Activated CD4-positive, alpha-beta T cell treated with anti-CD3 and anti-CD28 coated beads for 36 hours (primary cell): ENCODE measurements at regions of chr17 and their contacts with region 1.

Region 1: GRCh38 chr17:64320613-64321553 is 57.8 kb upstream of the TEX2 start:
- DNase-seq: peak; percentile 68
- ATAC-seq: peak; percentile 64
- H3K4me3 Mint-ChIP-seq: no peak overlapping the region
- H3K27ac Mint-ChIP-seq: no peak overlapping the region
- H3K4me1 Mint-ChIP-seq: peaks cover 6% of the 10 kb centered on the region
- H3K27me3 Mint-ChIP-seq: no peaks in the 10 kb centered on the region

Region 2: GRCh38 chr17:64336760-64337455 is 16.0 kb after region 1 on chr17:
- CTCF ChIA-PET with region 1: interaction called, 13 read pairs
- POLR2A ChIA-PET with region 1: no interaction called
- intact Hi-C with region 1: no loop called
- DNase-seq: no peak
- ATAC-seq: no peak
- H3K4me3 Mint-ChIP-seq: no peak overlapping the region
- H3K27ac Mint-ChIP-seq: peak overlapping the region; percentile 42
- H3K4me1 Mint-ChIP-seq: peaks cover 3% of the 10 kb centered on the region
- H3K27me3 Mint-ChIP-seq: no peaks in the 10 kb centered on the region

Region 3: GRCh38 chr17:64406321-64407200 is 85.7 kb after region 1 on chr17:
- CTCF ChIA-PET with region 1: interaction called, 28 read pairs
- POLR2A ChIA-PET with region 1: no interaction called
- intact Hi-C with region 1: no loop called
- DNase-seq: no peak
- ATAC-seq: peak; percentile 16
- H3K4me3 Mint-ChIP-seq: no peak overlapping the region
- H3K27ac Mint-ChIP-seq: no peak overlapping the region
- H3K4me1 Mint-ChIP-seq: peaks cover 6% of the 10 kb centered on the region
- H3K27me3 Mint-ChIP-seq: no peaks in the 10 kb centered on the region

Region 4: DNA sequence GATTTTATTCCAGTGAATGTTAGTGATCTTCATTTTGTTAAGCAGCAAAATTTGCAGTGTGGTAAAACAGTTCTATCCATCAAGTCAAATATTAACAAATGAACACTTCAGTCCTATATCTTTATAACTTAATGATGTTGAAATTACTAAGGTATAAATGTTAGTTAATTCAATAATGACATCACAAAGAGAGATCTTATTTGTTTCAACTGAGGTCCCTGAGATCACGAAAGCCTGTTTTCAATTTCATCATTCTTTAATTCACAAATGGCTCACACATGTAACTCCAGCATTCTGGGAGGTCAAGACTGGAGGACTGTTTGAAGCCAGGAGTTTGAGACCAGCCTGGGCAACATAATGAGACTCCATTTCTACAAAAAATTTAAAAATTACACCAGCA is 327.4 kb after region 1 on chr17:
- CTCF ChIA-PET with region 1: no interaction called
- POLR2A ChIA-PET with region 1: no interaction called
- intact Hi-C with region 1: loop called (anchors 5 to 10 kb)
- DNase-seq: no peak
- ATAC-seq: no peak
- H3K4me3 Mint-ChIP-seq: no peak overlapping the region
- H3K27ac Mint-ChIP-seq: peak overlapping the region; percentile 89
- H3K4me1 Mint-ChIP-seq: peaks cover 37% of the 10 kb centered on the region
- H3K27me3 Mint-ChIP-seq: no peaks in the 10 kb centered on the region

Region 5: GRCh38 chr17:64736804-64737492 is 416.1 kb after region 1 on chr17:
- CTCF ChIA-PET with region 1: interaction called, 4 read pairs
- POLR2A ChIA-PET with region 1: no interaction called
- intact Hi-C with region 1: loop called in 1 of 2 experiments (anchors 5 kb)
- DNase-seq: peak; percentile 73
- ATAC-seq: peak; percentile 91
- H3K4me3 Mint-ChIP-seq: no peak overlapping the region
- H3K27ac Mint-ChIP-seq: no peak overlapping the region
- H3K4me1 Mint-ChIP-seq: peaks cover 9% of the 10 kb centered on the region
- H3K27me3 Mint-ChIP-seq: no peaks in the 10 kb centered on the region